Activated B cell treated with CpG ODN at 0.5 μM for 24 hours (primary cell): ENCODE measurements at regions of chr22 and their contacts with region 1.

Region 1: GRCh38 chr22:44068422-44069191 is 44.5 kb downstream of the PARVB start:
- DNase-seq: peak; percentile 56
- ATAC-seq: peak; percentile 62
- H3K4me3 Mint-ChIP-seq: peak overlapping the region; percentile 76
- H3K27ac Mint-ChIP-seq: peak overlapping the region; percentile 94
- H3K4me1 Mint-ChIP-seq: peaks cover 65% of the 10 kb centered on the region
- H3K27me3 Mint-ChIP-seq: no peaks in the 10 kb centered on the region
- CTCF ChIP-seq: no peak

Region 2: DNA sequence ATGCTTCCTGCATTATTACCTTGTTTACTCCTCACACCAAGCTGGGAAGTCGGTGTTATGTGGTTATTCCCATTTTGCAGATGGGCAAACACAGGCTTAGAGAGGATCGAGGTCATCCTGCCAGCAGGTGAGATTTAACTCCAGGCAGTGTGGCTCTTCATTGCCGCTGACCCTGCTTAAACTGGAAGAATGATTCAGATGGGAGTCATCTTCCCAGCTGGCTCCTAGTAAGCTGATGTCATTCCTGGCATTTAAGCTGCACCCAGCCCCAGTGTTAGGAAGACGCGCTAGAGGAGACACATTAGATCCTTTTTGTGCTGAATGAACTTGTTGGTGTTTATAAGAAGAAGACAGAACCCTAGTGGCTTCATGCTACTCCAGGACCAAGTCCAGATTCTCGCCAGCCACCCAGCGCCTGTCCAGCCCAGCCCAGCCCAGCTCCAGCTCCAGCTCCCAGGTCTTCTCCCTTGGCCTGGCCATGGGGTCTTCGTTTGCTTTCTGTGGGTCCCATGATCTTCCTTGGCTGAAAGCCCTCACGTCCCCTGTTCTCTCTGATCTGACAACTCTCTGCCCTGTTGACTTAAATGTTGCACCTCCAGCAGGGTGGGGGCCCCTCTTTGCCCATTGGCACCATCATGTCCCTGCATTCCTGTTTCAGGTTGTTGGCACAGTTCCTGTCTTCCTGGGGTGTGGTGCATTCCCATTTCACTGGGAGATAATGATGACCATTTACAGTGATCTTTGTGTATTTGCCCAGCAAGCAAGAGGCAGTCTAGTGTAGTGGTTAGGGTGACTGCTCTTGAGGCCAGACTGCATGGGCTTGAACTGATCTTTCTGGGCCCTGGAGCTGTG is 30.9 kb before region 1 on chr22:
- CTCF ChIA-PET with region 1: no interaction called
- POLR2A ChIA-PET with region 1: interaction called, 7 read pairs
- intact Hi-C with region 1: loop called (anchors 2 kb)
- DNase-seq: no peak
- ATAC-seq: no peak
- H3K4me3 Mint-ChIP-seq: no peak overlapping the region
- H3K27ac Mint-ChIP-seq: no peak overlapping the region
- H3K4me1 Mint-ChIP-seq: peaks cover 17% of the 10 kb centered on the region
- H3K27me3 Mint-ChIP-seq: no peaks in the 10 kb centered on the region
- CTCF ChIP-seq: no peak

Region 3: DNA sequence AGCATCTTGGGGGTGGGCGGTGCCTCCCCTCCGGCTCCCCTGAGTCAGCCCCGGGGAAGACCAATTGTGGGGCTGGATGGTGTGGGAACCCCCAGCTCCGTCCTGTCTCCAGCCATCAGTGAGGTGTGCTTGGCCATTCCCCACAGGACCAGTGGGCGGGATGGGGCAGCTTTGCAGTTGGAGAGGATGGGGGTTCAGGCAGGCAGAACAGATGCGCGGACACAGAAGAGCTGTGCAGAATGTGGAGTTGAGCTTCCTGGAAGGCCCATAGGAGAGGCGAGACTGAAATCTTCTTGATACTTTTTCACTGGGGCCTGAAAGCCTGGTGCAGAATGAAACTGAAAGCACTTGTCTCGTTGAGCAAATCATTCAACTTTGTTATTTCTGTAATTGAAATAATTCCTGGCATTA is 20.7 kb before region 1 on chr22:
- CTCF ChIA-PET with region 1: no interaction called
- POLR2A ChIA-PET with region 1: no interaction called
- intact Hi-C with region 1: loop called (anchors 1 kb)
- DNase-seq: no peak
- ATAC-seq: peak; percentile 32
- H3K4me3 Mint-ChIP-seq: peak overlapping the region; percentile 55
- H3K27ac Mint-ChIP-seq: peak overlapping the region; percentile 32
- H3K4me1 Mint-ChIP-seq: peaks cover 77% of the 10 kb centered on the region
- H3K27me3 Mint-ChIP-seq: no peaks in the 10 kb centered on the region
- CTCF ChIP-seq: no peak

Region 4: GRCh38 chr22:44080936-44081861 is 12.6 kb after region 1 on chr22:
- CTCF ChIA-PET with region 1: interaction called, 22 read pairs
- POLR2A ChIA-PET with region 1: interaction called, 4 read pairs
- intact Hi-C with region 1: no loop called
- DNase-seq: peak; percentile 55
- ATAC-seq: peak; percentile 49
- H3K4me3 Mint-ChIP-seq: no peak overlapping the region
- H3K27ac Mint-ChIP-seq: no peak overlapping the region
- H3K4me1 Mint-ChIP-seq: peaks cover 4% of the 10 kb centered on the region
- H3K27me3 Mint-ChIP-seq: no peaks in the 10 kb centered on the region
- CTCF ChIP-seq: peak; percentile 19

Region 5: DNA sequence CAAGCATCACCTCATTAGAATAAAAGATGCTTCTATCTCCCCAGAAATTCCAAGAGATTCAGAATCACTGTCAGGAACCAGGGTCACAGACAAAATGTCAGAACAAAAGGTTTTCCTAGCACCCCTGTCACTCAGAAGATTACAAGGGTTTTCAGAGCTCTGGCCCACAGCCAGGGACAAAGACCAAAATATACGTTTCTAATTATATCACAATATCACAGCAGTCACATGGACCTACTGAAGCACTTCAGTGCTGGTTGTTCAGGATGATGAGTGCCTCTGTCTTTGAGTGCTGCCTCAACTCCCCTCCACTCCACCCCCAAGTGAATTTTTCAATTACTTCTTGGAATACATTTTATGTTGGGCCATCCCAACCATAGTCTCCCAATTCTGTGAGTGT is 451.3 kb after region 1 on chr22:
- CTCF ChIA-PET with region 1: no interaction called
- POLR2A ChIA-PET with region 1: no interaction called
- intact Hi-C with region 1: no loop called
- DNase-seq: no peak
- ATAC-seq: no peak
- H3K4me3 Mint-ChIP-seq: no peak overlapping the region
- H3K27ac Mint-ChIP-seq: no peak overlapping the region
- H3K4me1 Mint-ChIP-seq: no peaks in the 10 kb centered on the region
- H3K27me3 Mint-ChIP-seq: peaks cover 24% of the 10 kb centered on the region
- CTCF ChIP-seq: no peak